OCI-LY7 (cell line): ENCODE measurements at regions of chr9 and their contacts with region 1.

Region 1: DNA sequence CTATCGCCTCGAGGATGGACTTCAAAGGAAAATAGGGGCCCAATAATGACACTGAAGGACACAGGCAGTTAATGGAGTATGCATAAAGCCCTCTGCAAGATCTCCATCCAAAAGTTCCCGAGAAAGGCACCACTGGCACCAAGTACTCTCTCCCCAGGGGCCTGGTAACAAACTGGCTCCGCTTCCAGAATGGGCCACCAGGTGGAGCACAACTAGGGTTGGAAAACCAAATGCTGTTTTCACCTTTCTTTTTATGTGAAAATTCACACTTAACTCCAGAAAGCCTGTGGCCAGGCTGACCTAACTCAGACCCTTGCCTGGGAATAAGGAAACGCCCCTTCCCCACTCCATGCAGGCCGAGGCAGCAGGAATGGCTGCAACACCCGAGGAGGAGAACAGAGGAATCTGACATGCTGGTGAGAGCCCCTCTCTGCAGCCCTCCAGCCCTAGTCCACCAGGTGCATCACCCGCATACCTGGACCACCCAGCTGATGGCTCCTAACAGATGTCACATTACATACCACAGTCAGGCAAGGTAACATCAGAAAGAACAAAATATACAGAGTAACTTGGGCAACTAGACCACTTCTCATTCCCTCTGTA is 42.8 kb downstream of the CAMSAP1 start:
- DNase-seq: peak; percentile 60
- H3K4me3 ChIP-seq: no peak overlapping the region
- H3K27ac ChIP-seq: no peak overlapping the region
- H3K4me1 ChIP-seq: peaks cover 7% of the 10 kb centered on the region
- CTCF ChIP-seq: peak; percentile 96

Region 2: DNA sequence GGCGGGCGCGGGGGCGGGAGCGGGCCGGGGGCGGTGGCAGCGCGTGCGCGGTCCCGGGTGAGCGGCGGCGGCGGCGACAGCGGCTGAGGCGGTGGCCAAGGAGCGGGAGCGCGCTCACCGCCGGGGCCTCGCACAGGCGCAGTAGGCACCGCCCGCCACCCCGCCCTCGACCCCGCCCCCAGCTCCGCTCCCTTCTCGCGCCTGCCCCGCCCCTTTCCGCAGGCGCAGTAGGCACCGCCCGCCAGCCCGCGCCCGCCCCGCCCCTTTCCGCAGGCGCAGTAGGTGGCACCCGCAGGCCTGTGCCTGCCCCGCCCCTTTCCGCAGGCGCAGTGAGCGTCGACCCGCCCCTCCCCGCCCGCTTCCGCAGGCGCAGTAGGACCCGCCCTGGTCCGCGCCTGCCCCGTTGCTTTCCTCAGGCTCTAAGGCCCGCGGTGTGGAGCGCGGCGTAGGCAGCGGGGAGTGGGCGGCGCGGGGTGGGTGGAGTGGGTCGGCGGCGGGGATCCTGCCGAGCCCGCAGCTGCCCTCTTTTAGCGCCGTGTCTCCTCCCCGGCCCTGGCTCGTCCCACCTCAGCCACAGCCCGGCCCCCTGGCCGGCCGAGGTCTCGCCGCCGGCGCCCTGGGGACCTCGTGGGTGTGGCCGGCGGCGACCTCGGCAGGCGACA is 43.0 kb after region 1 on chr9 and contains the start of gene CAMSAP1:
- CTCF ChIA-PET with region 1: no interaction called
- POLR2A ChIA-PET with region 1: no interaction called
- intact Hi-C with region 1: loop called (anchors 5 kb)
- DNase-seq: peak; percentile 94
- H3K4me3 ChIP-seq: peak within 1 kb of the TSS; percentile 81
- H3K27ac ChIP-seq: peak within 1 kb of the TSS; percentile 26
- H3K4me1 ChIP-seq: peaks cover 45% of the 10 kb centered on the region
- CTCF ChIP-seq: no peak
- total RNA-seq, gene CAMSAP1: 20.1 and 30.4 TPM in 2 replicates

Region 3: GRCh38 chr9:135961277-135961705 is 96.7 kb after region 1 on chr9 and contains the start of gene UBAC1:
- CTCF ChIA-PET with region 1: no interaction called
- POLR2A ChIA-PET with region 1: no interaction called
- intact Hi-C with region 1: loop called (anchors 10 kb)
- DNase-seq: peak; percentile 97
- H3K4me3 ChIP-seq: peak within 1 kb of the TSS; percentile 98
- H3K27ac ChIP-seq: peak within 1 kb of the TSS; percentile 9
- H3K4me1 ChIP-seq: peaks cover 34% of the 10 kb centered on the region
- CTCF ChIP-seq: 0 out of 2 replicates have a peak, but pooled peaks have one; percentile 9
- total RNA-seq, gene UBAC1: 59.2 and 75.7 TPM in 2 replicates